CD8-positive, alpha-beta T cell (primary cell): ENCODE measurements at regions of chr19 and their contacts with region 1.

Region 1: GRCh38 chr19:38769635-38770211 is 3.6 kb downstream of the LGALS7 start:
- DNase-seq: peak; percentile 80 to 98 (median 93)
- ATAC-seq: peak; percentile 85
- H3K4me3 ChIP-seq: peak overlapping the region; percentile 38 to 41
- H3K4me3 Mint-ChIP-seq: peak overlapping the region; percentile 68
- H3K27ac ChIP-seq: peak overlapping the region in 1 of 2 experiments; percentile 77
- H3K27ac Mint-ChIP-seq: peak overlapping the region; percentile 60
- H3K4me1 ChIP-seq: peaks cover 5% of the 10 kb centered on the region
- H3K4me1 Mint-ChIP-seq: peaks cover 5% of the 10 kb centered on the region
- H3K27me3 ChIP-seq: no peaks in the 10 kb centered on the region
- H3K27me3 Mint-ChIP-seq: no peaks in the 10 kb centered on the region
- CTCF ChIP-seq: peak; percentile 65

Region 2: GRCh38 chr19:38792250-38793111 is 22.8 kb after region 1 on chr19:
- CTCF ChIA-PET with region 1: interaction called, 5 read pairs
- POLR2A ChIA-PET with region 1: no interaction called
- intact Hi-C with region 1: loop called in 1 of 2 experiments (anchors 2 kb)
- DNase-seq: peak in 8 of 9 experiments; percentile 9 to 62 (median 44)
- ATAC-seq: peak; percentile 36
- H3K4me3 ChIP-seq: peak overlapping the region; percentile 30 to 43
- H3K4me3 Mint-ChIP-seq: peak overlapping the region; percentile 63
- H3K27ac ChIP-seq: no peak overlapping the region
- H3K27ac Mint-ChIP-seq: no peak overlapping the region
- H3K4me1 ChIP-seq: peaks cover 7% of the 10 kb centered on the region
- H3K4me1 Mint-ChIP-seq: peaks cover 4% of the 10 kb centered on the region
- H3K27me3 ChIP-seq: no peaks in the 10 kb centered on the region
- H3K27me3 Mint-ChIP-seq: no peaks in the 10 kb centered on the region
- CTCF ChIP-seq: no peak

Region 3: DNA sequence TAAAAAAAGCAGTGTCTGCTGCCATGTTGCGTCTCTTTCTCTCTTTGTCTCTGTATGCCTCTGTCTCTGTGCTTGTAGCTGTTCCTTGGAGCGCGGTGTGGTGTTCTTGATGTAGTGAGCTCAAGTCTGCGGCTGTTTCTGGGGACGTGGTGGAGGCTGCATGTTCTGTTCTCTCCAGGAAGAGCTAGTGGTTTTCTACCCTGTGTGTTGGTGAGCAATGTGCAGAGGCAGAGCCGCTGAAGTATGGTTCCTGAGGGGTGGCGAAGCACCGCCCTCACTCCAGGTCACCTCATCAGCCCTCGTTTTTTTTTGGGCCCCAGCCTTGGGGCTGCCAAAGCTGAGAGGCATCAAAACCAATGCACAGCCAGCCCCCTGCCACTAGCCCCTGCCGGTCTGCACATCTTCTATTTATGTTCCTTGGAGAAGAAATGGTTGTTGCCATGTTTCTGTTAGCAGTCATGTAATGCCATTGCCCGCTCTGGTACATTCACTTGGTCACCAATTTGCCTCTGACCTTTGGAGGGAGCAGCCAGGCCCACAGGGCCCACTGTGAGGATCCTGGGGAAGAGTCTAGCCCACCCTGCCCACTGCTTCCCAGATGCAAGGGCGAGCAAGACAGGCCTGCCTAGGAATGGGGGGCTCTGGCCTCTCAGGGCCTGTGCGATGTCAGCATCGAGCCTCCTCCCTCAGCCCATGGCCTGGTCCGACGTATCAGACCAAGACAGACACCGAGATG is 72.9 kb after region 1 on chr19:
- CTCF ChIA-PET with region 1: interaction called, 3 read pairs
- POLR2A ChIA-PET with region 1: interaction called, 6 read pairs
- intact Hi-C with region 1: loop called in 1 of 2 experiments (anchors 5 kb)
- DNase-seq: peak; percentile 38 to 88 (median 72)
- ATAC-seq: peak; percentile 79
- H3K4me3 ChIP-seq: peak overlapping the region in 1 of 2 experiments; percentile 34
- H3K4me3 Mint-ChIP-seq: peak overlapping the region; percentile 72
- H3K27ac ChIP-seq: peak overlapping the region; percentile 46 to 56
- H3K27ac Mint-ChIP-seq: peak overlapping the region; percentile 89
- H3K4me1 ChIP-seq: peaks cover 80% of the 10 kb centered on the region
- H3K4me1 Mint-ChIP-seq: peaks cover 76% of the 10 kb centered on the region
- H3K27me3 ChIP-seq: no peaks in the 10 kb centered on the region
- H3K27me3 Mint-ChIP-seq: no peaks in the 10 kb centered on the region
- CTCF ChIP-seq: no peak

Region 4: GRCh38 chr19:38899447-38900219 is 129.9 kb after region 1 on chr19 and contains the starts of genes NFKBIB and SIRT2:
- CTCF ChIA-PET with region 1: no interaction called
- POLR2A ChIA-PET with region 1: interaction called, 4 read pairs
- intact Hi-C with region 1: loop called in 1 of 2 experiments (anchors 5 kb)
- DNase-seq: peak; percentile 97 to 100 (median 99)
- ATAC-seq: peak; percentile 85
- H3K4me3 ChIP-seq: peak within 1 kb of the TSS; percentile 68 to 88
- H3K4me3 Mint-ChIP-seq: peak within 1 kb of the TSS; percentile 93
- H3K27ac ChIP-seq: peak within 1 kb of the TSS; percentile 93 to 100
- H3K27ac Mint-ChIP-seq: peak within 1 kb of the TSS; percentile 98
- H3K4me1 ChIP-seq: peaks cover 23% of the 10 kb centered on the region
- H3K4me1 Mint-ChIP-seq: peaks cover 57% of the 10 kb centered on the region
- H3K27me3 ChIP-seq: no peaks in the 10 kb centered on the region
- H3K27me3 Mint-ChIP-seq: no peaks in the 10 kb centered on the region
- CTCF ChIP-seq: no peak
- total RNA-seq, gene NFKBIB: 62.9 to 66.1 TPM
- total RNA-seq, gene SIRT2: 90.6 to 95.1 TPM